ENCODE measurements at regions of chr1 and their contacts with region 1.

Region 1: GRCh38 chr1:222465211-222466041 is 82.5 kb downstream of the HHIPL2 start:
- DNase-seq: peak; percentile 87 to 95 (median 91)
- H3K4me3 ChIP-seq: peak overlapping the region; percentile 43
- H3K27ac ChIP-seq: peak overlapping the region; percentile 31 to 81
- H3K4me1 ChIP-seq: peaks cover 2% of the 10 kb centered on the region
- H3K27me3 ChIP-seq: no peaks in the 10 kb centered on the region
- CTCF ChIP-seq: peak; percentile 100
- EP300 ChIP-seq: no peak
- POLR2A ChIP-seq: no peak

Region 2: DNA sequence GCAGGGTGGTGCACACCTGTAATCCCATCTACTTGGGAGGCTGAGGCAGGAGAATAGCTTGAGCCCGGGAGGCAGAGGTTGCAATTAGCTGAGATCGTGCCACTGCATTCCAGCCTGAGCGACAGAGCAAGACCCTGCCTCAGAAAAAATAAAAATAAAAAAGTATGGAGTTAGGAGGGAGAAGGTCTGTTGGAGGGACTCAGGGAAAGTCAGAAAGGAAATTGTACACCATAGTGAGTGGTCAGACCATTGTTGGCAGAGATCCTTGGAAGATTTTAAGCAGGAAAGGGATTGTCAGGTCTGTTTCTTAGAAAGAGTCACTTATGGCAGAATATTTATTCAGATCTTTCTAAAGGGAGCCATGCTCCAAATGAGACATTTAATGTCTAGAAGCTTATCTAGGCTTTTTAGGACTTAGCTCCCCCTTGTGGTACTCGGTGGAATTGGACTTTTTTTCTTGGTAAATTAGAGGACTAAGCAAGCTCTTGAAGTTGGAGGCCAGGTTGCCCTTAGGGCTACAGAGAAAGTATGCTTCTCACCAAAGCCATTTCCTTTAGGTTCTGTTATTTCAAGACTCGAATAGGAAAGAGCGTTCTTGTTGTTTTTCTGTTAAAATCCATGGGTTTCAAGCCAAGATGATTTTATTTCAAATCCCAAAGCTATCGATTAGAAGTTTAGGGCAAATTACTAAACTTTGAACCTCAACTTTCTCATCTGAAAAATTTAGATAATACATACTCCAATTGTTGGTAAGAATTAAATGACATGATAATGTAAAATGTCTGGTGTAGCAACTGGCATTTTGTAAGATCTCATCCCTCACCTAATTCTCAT is 169.0 kb after region 1 on chr1:
- intact Hi-C with region 1: loop called (anchors 1 to 5 kb)
- DNase-seq: peak in 3 of 5 donors; percentile 33 to 78 (median 50)
- H3K4me3 ChIP-seq: no peak overlapping the region
- H3K27ac ChIP-seq: no peak overlapping the region
- H3K4me1 ChIP-seq: no peaks in the 10 kb centered on the region
- H3K27me3 ChIP-seq: no peaks in the 10 kb centered on the region
- CTCF ChIP-seq: peak; percentile 77 to 84 (median 77)
- EP300 ChIP-seq: no peak
- POLR2A ChIP-seq: no peak